GM12878 (cell line): ENCODE measurements at regions of chr16 and their contacts with region 1.

Region 1: GRCh38 chr16:30429678-30430427 is at the start of gene DCTPP1:
- DNase-seq: peak; percentile 99
- ATAC-seq: peak; percentile 98
- H3K4me3 ChIP-seq: peak within 1 kb of the TSS; percentile 93
- H3K27ac ChIP-seq: peak within 1 kb of the TSS; percentile 81
- H3K4me1 ChIP-seq: peaks cover 13% of the 10 kb centered on the region
- H3K27me3 ChIP-seq: no peaks in the 10 kb centered on the region
- CTCF ChIP-seq: peak; percentile 85 to 92 (median 90)
- EP300 ChIP-seq: 0 out of 4 replicates have a peak, but pooled peaks of 1 of the 2 experiments have one; percentile 30
- POLR2A ChIP-seq: peak; percentile 84
- RAD21 ChIP-seq: peak; percentile 78
- polyA plus RNA-seq, gene DCTPP1: 76.6 to 162 TPM

Region 2: GRCh38 chr16:30417529-30418349 is 12.1 kb before region 1 on chr16:
- CTCF ChIA-PET with region 1: interaction called, 13 read pairs
- POLR2A ChIA-PET with region 1: interaction called, 11 read pairs
- RAD21 ChIA-PET with region 1: interaction called, 13 read pairs
- SMC1A ChIA-PET with region 1: interaction called, 12 read pairs
- in situ Hi-C with region 1: no loop called
- intact Hi-C with region 1: no loop called
- DNase-seq: peak; percentile 84
- ATAC-seq: peak; percentile 97
- H3K4me3 ChIP-seq: peak overlapping the region; percentile 69
- H3K27ac ChIP-seq: peak overlapping the region; percentile 47
- H3K4me1 ChIP-seq: peaks cover 8% of the 10 kb centered on the region
- H3K27me3 ChIP-seq: no peaks in the 10 kb centered on the region
- CTCF ChIP-seq: peak in 2 of 3 experiments; percentile 29 to 33; a peak in 3 of 6 replicates
- EP300 ChIP-seq: peak in 1 of 2 experiments; percentile 33; a peak in 1 of 4 replicates
- POLR2A ChIP-seq: peak; percentile 84; the same call in 1 of the 2 replicates
- RAD21 ChIP-seq: no peak

Region 3: GRCh38 chr16:30526823-30527635 is 97.2 kb after region 1 on chr16:
- CTCF ChIA-PET with region 1: interaction called, 24 read pairs
- POLR2A ChIA-PET with region 1: interaction called, 4 read pairs
- RAD21 ChIA-PET with region 1: interaction called, 17 read pairs
- SMC1A ChIA-PET with region 1: interaction called, 10 read pairs
- in situ Hi-C with region 1: no loop called
- intact Hi-C with region 1: loop called (anchors 2 kb)
- DNase-seq: peak; percentile 89
- ATAC-seq: peak; percentile 95
- H3K4me3 ChIP-seq: peak overlapping the region; percentile 91
- H3K27ac ChIP-seq: peak overlapping the region; percentile 93
- H3K4me1 ChIP-seq: peaks cover 15% of the 10 kb centered on the region
- H3K27me3 ChIP-seq: no peaks in the 10 kb centered on the region
- CTCF ChIP-seq: peak; percentile 19 to 42 (median 25); a peak in 4 of 6 replicates
- EP300 ChIP-seq: no peak
- POLR2A ChIP-seq: peak; percentile 42; the same call in 1 of the 2 replicates
- RAD21 ChIP-seq: no peak

Region 4: GRCh38 chr16:30585400-30586189 is 155.7 kb after region 1 on chr16 and contains the start of gene ZNF785:
- CTCF ChIA-PET with region 1: interaction called, 12 read pairs
- POLR2A ChIA-PET with region 1: interaction called, 11 read pairs
- RAD21 ChIA-PET with region 1: interaction called, 3 read pairs
- SMC1A ChIA-PET with region 1: interaction called, 8 read pairs
- in situ Hi-C with region 1: no loop called
- intact Hi-C with region 1: no loop called
- DNase-seq: peak; percentile 97
- ATAC-seq: peak; percentile 98
- H3K4me3 ChIP-seq: peak within 1 kb of the TSS; percentile 98
- H3K27ac ChIP-seq: peak within 1 kb of the TSS; percentile 89
- H3K4me1 ChIP-seq: peaks cover 3% of the 10 kb centered on the region; the same call in 1 of the 2 replicates
- H3K27me3 ChIP-seq: no peaks in the 10 kb centered on the region
- CTCF ChIP-seq: peak in 2 of 3 experiments; percentile 14 to 33; a peak in 3 of 6 replicates
- EP300 ChIP-seq: no peak
- POLR2A ChIP-seq: peak; percentile 51
- RAD21 ChIP-seq: no peak
- polyA plus RNA-seq, gene ZNF785: 0.87 to 1.5 TPM

Region 5: GRCh38 chr16:30621765-30622164 is 191.9 kb after region 1 on chr16:
- CTCF ChIA-PET with region 1: interaction called, 17 read pairs
- POLR2A ChIA-PET with region 1: no interaction called
- RAD21 ChIA-PET with region 1: interaction called, 10 read pairs
- SMC1A ChIA-PET with region 1: interaction called, 4 read pairs
- in situ Hi-C with region 1: no loop called
- intact Hi-C with region 1: no loop called
- DNase-seq: no peak
- ATAC-seq: no peak
- H3K4me3 ChIP-seq: no peak overlapping the region
- H3K27ac ChIP-seq: no peak overlapping the region
- H3K4me1 ChIP-seq: no peaks in the 10 kb centered on the region
- H3K27me3 ChIP-seq: no peaks in the 10 kb centered on the region
- CTCF ChIP-seq: no peak
- EP300 ChIP-seq: no peak
- POLR2A ChIP-seq: no peak
- RAD21 ChIP-seq: no peak